ENCODE measurements at regions of chr1 and their contacts with region 1.

Region 1: GRCh38 chr1:150372580-150372979 is 8.6 kb downstream of the RPRD2 start:
- DNase-seq: no peak
- H3K4me3 ChIP-seq: no peak overlapping the region
- H3K27ac ChIP-seq: no peak overlapping the region
- H3K4me1 ChIP-seq: peaks cover 8% of the 10 kb centered on the region
- H3K27me3 ChIP-seq: no peaks in the 10 kb centered on the region
- CTCF ChIP-seq: no peak

Region 2: GRCh38 chr1:150346316-150346715 is 26.3 kb before region 1 on chr1:
- CTCF ChIA-PET with region 1: no interaction called
- dilution Hi-C with region 1: no loop called
- in situ Hi-C with region 1: no loop called
- intact Hi-C with region 1: no loop called
- DNase-seq: no peak
- H3K4me3 ChIP-seq: no peak overlapping the region
- H3K27ac ChIP-seq: no peak overlapping the region
- H3K4me1 ChIP-seq: no peaks in the 10 kb centered on the region
- H3K27me3 ChIP-seq: no peaks in the 10 kb centered on the region
- CTCF ChIP-seq: no peak

Region 3: DNA sequence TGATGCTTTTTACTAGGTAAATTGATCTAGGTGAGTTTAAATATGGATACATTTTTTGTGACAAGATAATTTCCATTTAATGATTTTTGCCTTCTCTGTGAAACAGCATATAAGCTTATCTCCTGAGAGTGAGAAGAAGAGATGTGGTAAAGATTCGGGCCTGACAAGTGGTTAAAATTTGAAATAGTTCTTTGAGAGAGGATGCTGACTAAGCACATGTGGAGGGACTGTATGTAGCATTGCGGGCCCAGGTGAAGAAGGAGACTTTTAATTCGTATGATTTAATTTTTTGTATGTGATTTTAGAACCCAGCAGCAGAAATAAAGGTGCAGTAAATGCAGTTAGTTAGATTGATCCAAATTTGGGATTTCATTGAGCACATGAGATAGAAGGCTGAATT is 43.2 kb after region 1 on chr1:
- CTCF ChIA-PET with region 1: no interaction called
- dilution Hi-C with region 1: loop called (anchors 5 kb)
- in situ Hi-C with region 1: no loop called
- intact Hi-C with region 1: no loop called
- DNase-seq: no peak
- H3K4me3 ChIP-seq: no peak overlapping the region
- H3K27ac ChIP-seq: no peak overlapping the region
- H3K4me1 ChIP-seq: no peaks in the 10 kb centered on the region
- H3K27me3 ChIP-seq: no peaks in the 10 kb centered on the region
- CTCF ChIP-seq: no peak

Region 4: DNA sequence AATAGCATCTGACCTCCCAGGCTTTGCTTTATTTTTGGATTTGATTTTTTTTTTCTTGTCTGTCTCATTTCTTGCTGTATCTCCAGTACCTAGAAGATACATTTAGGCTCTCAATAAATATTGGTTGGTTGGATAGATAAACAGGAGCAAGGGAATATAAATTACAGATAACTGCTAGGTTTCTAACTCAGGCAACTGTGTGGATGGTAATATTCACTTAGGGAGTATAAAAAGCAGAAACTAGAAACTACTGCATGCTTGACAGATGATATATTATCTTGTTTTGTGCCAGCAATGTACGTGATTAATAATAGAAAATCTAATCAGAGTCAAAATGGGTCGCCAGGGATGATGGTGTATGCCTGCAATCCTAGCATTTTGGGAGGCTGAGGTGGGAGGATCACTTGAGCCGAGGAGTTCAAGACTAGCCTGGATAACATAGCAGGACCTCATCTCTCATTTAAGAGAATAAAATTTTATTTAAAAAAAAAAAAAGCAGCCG is 83.6 kb after region 1 on chr1:
- CTCF ChIA-PET with region 1: no interaction called
- dilution Hi-C with region 1: loop called (anchors 5 kb)
- in situ Hi-C with region 1: no loop called
- intact Hi-C with region 1: no loop called
- DNase-seq: no peak
- H3K4me3 ChIP-seq: no peak overlapping the region
- H3K27ac ChIP-seq: no peak overlapping the region
- H3K4me1 ChIP-seq: no peaks in the 10 kb centered on the region
- H3K27me3 ChIP-seq: no peaks in the 10 kb centered on the region
- CTCF ChIP-seq: no peak

Measured in mammary epithelial cell (primary cell).